CD14-positive monocyte (primary cell): ENCODE measurements at regions of chr4 and their contacts with region 1.

Region 1: GRCh38 chr4:1346781-1347409 is at the start of gene UVSSA:
- DNase-seq: peak; percentile 99 to 100 (median 100)
- H3K4me3 ChIP-seq: peak within 1 kb of the TSS; percentile 59 to 86 (median 86)
- H3K4me3 Mint-ChIP-seq: peak within 1 kb of the TSS; percentile 90 to 94
- H3K27ac ChIP-seq: peak within 1 kb of the TSS; percentile 90 to 95
- H3K27ac Mint-ChIP-seq: peak within 1 kb of the TSS; percentile 93 to 98 (median 97)
- H3K4me1 ChIP-seq: peaks cover 20 to 29% of the 10 kb centered on the region in 2 donors
- H3K4me1 Mint-ChIP-seq: peaks cover 33% of the 10 kb centered on the region
- H3K27me3 ChIP-seq: no peaks in the 10 kb centered on the region
- H3K27me3 Mint-ChIP-seq: peaks cover 0 to 2% (median 0%) of the 10 kb centered on the region in 3 donors
- CTCF ChIP-seq: no peak
- polyA plus RNA-seq, gene UVSSA: 2.6 to 54.0 (median 4.8) TPM

Region 2: DNA sequence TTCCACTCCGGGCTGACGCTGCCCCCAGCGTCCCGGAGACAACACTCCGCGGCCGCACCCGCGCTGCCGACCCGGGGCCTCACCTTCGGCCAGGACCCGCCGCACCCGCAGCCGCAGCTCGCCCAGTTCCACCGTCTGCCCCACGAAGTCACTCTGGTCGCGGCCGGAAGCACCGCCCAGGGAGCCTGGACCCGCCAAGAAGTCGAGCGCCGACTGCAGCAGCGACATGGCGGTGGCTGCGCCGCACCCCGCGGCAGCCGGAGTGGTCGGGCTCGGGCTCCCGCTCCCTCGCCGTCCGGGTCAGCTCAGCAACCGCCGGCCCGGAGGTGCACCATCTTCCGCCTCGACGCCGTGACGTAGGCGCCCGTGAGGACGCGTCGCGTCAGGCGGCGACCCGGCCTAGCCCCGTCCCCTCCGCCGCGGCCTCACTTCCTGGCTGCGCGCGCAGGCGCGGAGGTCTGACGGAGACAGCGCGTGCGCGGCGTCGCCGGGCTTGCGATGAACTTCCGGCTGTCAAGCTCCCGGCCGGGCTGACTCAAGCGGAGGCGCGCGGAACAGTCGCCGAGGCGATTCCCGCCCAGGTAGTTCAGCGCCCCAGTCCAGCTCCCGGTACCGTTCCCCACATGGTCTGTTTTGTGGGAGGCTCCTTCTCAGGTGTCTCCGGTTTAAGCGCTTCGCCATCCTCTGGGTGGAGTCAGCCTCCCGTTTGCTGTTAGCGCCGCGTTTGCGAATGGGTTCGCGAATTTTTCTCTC is 414.8 kb before region 1 on chr4 and contains the starts of genes GAK and TMEM175:
- intact Hi-C with region 1: loop called in 1 of 2 experiments (anchors 2 kb)
- DNase-seq: peak; percentile 96 to 97 (median 97)
- H3K4me3 ChIP-seq: peak within 1 kb of the TSS; percentile 92 to 97 (median 93)
- H3K4me3 Mint-ChIP-seq: peak within 1 kb of the TSS; percentile 96 to 98
- H3K27ac ChIP-seq: peak within 1 kb of the TSS; percentile 84 to 98
- H3K27ac Mint-ChIP-seq: peak within 1 kb of the TSS; percentile 96 to 99 (median 97)
- H3K4me1 ChIP-seq: peaks cover 69 to 76% of the 10 kb centered on the region in 2 donors
- H3K4me1 Mint-ChIP-seq: peaks cover 66% of the 10 kb centered on the region
- H3K27me3 ChIP-seq: no peaks in the 10 kb centered on the region
- H3K27me3 Mint-ChIP-seq: peaks cover 0 to 3% (median 3%) of the 10 kb centered on the region in 3 donors
- CTCF ChIP-seq: no peak
- polyA plus RNA-seq, gene GAK: 40.3 to 88.7 (median 54.9) TPM
- polyA plus RNA-seq, gene TMEM175: 18.9 to 216 (median 20.7) TPM

Region 3: DNA sequence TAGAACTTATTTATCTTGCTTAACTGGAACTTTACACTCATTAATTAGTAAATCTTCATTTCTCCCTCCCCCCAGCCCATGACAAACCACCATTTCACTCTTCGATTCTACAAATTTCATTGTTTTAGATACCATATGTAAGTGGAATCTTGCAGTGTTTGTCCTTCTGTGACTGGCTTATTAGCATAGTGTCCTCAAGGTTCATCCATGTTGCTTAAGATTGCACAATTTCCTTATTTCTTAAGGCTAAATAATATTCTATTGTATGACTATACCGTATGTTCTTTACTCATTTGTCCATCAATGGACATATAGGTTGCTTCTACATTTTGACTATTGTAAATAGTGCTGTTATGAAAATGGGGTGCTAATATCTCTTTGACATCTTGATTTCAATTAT is 209.0 kb before region 1 on chr4:
- intact Hi-C with region 1: loop called in 1 of 2 experiments (anchors 2 kb)
- DNase-seq: peak; percentile 65 to 92 (median 76)
- H3K4me3 ChIP-seq: peak overlapping the region; percentile 47 to 91 (median 76)
- H3K4me3 Mint-ChIP-seq: peak overlapping the region; percentile 57 to 89
- H3K27ac ChIP-seq: peak overlapping the region; percentile 47 to 96
- H3K27ac Mint-ChIP-seq: peak overlapping the region; percentile 90 to 96 (median 93)
- H3K4me1 ChIP-seq: peaks cover 26 to 35% of the 10 kb centered on the region in 2 donors
- H3K4me1 Mint-ChIP-seq: peaks cover 50% of the 10 kb centered on the region
- H3K27me3 ChIP-seq: no peaks in the 10 kb centered on the region
- H3K27me3 Mint-ChIP-seq: peaks cover 6 to 18% (median 18%) of the 10 kb centered on the region in 3 donors
- CTCF ChIP-seq: no peak

Region 4: DNA sequence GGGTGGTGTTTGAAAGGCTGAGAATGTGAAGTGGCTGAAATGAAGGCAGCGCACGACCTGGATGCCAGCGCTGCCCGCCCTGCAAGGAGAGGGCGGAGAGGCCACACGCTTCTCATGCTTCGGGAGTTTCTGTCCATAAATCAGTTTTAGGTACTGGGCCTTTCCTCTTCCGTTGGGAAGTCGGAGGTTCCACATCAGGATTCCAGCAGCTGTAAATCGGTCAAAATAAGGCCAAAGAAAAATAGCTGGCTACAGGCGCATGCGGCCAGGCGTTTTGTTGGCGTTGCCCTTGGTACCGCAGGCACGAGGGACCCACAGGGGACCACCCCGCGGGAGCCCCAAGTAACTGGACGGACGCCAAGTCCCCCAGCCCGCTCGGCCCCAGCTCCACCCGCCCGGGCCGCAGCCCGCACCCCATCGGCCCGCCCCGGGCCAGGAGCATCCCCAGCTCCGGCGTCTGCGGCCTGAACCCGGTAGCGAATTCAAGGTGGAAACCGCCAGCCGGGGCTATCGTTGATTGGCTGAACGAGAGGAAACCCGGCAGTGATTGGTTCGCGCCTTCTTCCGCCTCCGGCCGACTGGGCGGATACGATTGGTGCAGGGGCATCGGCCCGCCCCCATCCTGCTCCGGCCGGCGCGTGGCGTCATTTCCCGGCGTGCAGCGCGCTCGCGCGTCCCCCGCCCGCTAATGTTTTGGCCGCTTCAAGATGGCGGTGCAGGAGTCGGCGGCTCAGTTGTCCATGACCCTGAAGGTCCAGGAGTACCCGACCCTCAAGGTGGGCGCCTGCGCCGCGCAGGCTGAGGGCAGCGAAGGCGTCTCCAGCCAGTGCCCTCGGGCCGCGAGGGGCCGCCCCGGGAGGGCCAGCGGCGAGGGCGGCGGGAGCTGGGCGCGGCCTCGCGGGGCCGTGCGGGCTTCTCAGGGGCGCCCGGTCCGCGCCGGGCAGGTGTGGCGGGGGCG is 57.4 kb before region 1 on chr4 and contains the start of gene MAEA:
- intact Hi-C with region 1: loop called in 1 of 2 experiments (anchors 2 kb)
- DNase-seq: peak; percentile 96 to 97 (median 96)
- H3K4me3 ChIP-seq: peak within 1 kb of the TSS; percentile 54 to 82 (median 73)
- H3K4me3 Mint-ChIP-seq: peak within 1 kb of the TSS; percentile 97
- H3K27ac ChIP-seq: peak within 1 kb of the TSS; percentile 65 to 91
- H3K27ac Mint-ChIP-seq: peak within 1 kb of the TSS; percentile 90 to 97 (median 96)
- H3K4me1 ChIP-seq: peaks cover 25 to 36% of the 10 kb centered on the region in 2 donors
- H3K4me1 Mint-ChIP-seq: peaks cover 34% of the 10 kb centered on the region
- H3K27me3 ChIP-seq: no peaks in the 10 kb centered on the region
- H3K27me3 Mint-ChIP-seq: peaks cover 0 to 1% (median 0%) of the 10 kb centered on the region in 3 donors
- CTCF ChIP-seq: no peak
- polyA plus RNA-seq, gene MAEA: 34.3 to 83.5 (median 37.7) TPM

Region 5: DNA sequence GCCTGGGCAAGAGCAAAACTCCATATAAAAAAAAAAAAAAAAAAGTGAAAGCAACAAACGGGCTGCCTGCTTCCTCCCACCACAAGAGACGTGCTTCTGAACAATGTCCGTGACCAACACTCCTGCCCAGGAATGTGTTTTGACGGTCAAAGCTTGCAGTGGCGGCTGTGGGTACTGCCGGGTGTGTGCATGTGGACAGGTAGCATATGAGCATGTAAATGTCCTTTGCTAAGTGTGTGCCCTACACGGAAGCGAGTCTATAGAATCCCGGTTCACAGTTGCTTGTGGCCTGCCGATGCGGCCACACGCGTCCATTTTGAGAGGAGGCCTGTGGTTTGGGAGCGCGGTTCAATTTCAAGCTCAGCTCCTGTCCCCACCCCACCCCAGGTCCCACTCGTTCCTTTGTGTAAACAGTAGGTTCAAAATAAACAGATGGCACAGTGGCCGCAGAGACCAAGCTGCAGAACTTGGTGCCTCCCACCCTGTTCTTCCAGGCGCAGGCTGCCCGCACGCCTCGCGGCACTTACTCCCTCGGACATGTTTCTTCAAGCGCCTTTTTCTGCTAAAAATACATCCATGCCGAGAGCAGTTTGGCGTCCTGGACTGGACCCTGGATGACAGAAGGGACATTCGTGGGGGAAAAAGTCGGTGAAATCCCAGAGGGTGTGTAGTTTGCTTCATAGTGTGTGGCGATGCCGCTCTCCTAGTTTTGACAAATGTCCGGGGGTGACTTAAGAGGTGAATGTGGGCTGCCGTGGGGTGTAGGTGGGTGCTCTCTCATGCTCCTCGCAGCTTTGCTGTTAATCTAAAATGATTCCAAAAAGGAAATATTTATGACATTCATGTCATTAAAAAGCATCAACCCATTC is 70.9 kb after region 1 on chr4:
- intact Hi-C with region 1: no loop called
- DNase-seq: peak in 1 of 3 donors; percentile 0
- H3K4me3 ChIP-seq: no peak overlapping the region
- H3K4me3 Mint-ChIP-seq: no peak overlapping the region
- H3K27ac ChIP-seq: no peak overlapping the region
- H3K27ac Mint-ChIP-seq: no peak overlapping the region
- H3K4me1 ChIP-seq: no peaks in the 10 kb centered on the region
- H3K4me1 Mint-ChIP-seq: no peaks in the 10 kb centered on the region
- H3K27me3 ChIP-seq: peaks cover 0 to 29% of the 10 kb centered on the region in 2 donors
- H3K27me3 Mint-ChIP-seq: peaks cover 51 to 62% (median 53%) of the 10 kb centered on the region in 3 donors
- CTCF ChIP-seq: no peak

Region 6: DNA sequence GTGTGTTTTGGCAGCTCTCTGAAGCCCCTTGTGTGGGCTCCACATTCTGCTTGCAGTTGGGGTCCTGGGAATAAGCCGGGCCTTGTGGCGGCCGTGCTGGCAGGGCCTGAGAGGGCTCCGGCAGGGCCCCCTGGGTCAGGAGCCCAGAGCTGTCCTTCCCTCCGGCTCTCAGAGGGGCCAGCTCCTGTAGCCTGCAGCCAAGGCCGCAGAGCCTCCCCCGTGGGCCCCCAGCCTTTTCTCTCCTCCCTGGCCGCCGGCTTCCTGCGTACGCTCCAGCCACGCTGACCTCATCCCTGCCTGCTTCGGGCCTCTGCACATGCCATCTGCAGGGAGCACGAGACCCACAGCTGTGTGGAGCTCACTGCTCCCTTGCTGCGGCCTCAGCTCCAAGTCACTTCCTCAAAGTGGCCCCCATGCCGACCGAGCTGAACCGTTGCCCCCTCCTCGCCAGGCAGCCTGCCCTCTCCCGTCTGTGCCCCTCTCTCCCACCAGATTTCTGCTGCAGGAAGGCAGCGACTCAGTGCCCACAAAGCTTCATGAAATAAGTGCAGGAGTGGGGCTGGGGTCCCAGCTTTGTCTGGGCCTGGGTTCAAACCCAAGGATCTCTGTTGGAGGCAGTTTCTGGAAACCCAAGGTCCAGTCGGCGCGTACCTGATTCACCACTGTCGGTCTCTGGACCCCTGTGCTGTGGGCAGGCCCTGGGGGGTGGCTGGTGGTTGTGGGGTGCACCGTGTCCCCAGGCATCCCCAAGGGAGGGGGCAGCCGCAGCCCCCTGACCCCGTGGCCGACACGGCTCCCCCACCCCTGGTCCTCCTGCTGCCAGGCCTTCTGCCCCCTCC is 116.4 kb after region 1 on chr4:
- intact Hi-C with region 1: no loop called
- DNase-seq: no peak
- H3K4me3 ChIP-seq: no peak overlapping the region
- H3K4me3 Mint-ChIP-seq: no peak overlapping the region
- H3K27ac ChIP-seq: no peak overlapping the region
- H3K27ac Mint-ChIP-seq: no peak overlapping the region
- H3K4me1 ChIP-seq: no peaks in the 10 kb centered on the region
- H3K4me1 Mint-ChIP-seq: no peaks in the 10 kb centered on the region
- H3K27me3 ChIP-seq: peaks cover 0 to 18% of the 10 kb centered on the region in 2 donors
- H3K27me3 Mint-ChIP-seq: peaks cover 17 to 32% (median 21%) of the 10 kb centered on the region in 3 donors
- CTCF ChIP-seq: no peak

Region 7: GRCh38 chr4:1721004-1721665 is 374.2 kb after region 1 on chr4 and contains the starts of genes TACC3 and TMEM129:
- intact Hi-C with region 1: loop called in 1 of 2 experiments (anchors 5 kb)
- DNase-seq: peak; percentile 88 to 91 (median 89)
- H3K4me3 ChIP-seq: peak within 1 kb of the TSS; percentile 51 to 80 (median 56)
- H3K4me3 Mint-ChIP-seq: peak within 1 kb of the TSS; percentile 85 to 98
- H3K27ac ChIP-seq: peak within 1 kb of the TSS; percentile 88 to 96
- H3K27ac Mint-ChIP-seq: peak within 1 kb of the TSS; percentile 97 to 100 (median 98)
- H3K4me1 ChIP-seq: peaks cover 59 to 75% of the 10 kb centered on the region in 2 donors
- H3K4me1 Mint-ChIP-seq: peaks cover 62% of the 10 kb centered on the region
- H3K27me3 ChIP-seq: no peaks in the 10 kb centered on the region
- H3K27me3 Mint-ChIP-seq: peaks cover 0 to 3% (median 0%) of the 10 kb centered on the region in 3 donors
- CTCF ChIP-seq: no peak
- polyA plus RNA-seq, gene TACC3: 43.7 to 84.2 (median 56.6) TPM
- polyA plus RNA-seq, gene TMEM129: 22.4 to 40.2 (median 24.1) TPM

Region 8: GRCh38 chr4:1898681-1899080 is 551.8 kb after region 1 on chr4:
- intact Hi-C with region 1: no loop called
- DNase-seq: no peak
- H3K4me3 ChIP-seq: no peak overlapping the region
- H3K4me3 Mint-ChIP-seq: peak overlapping the region in 1 of 2 donors; percentile 59
- H3K27ac ChIP-seq: no peak overlapping the region
- H3K27ac Mint-ChIP-seq: no peak overlapping the region
- H3K4me1 ChIP-seq: peaks cover 0 to 2% of the 10 kb centered on the region in 2 donors
- H3K4me1 Mint-ChIP-seq: peaks cover 4% of the 10 kb centered on the region
- H3K27me3 ChIP-seq: no peaks in the 10 kb centered on the region
- H3K27me3 Mint-ChIP-seq: peaks cover 0 to 1% (median 0%) of the 10 kb centered on the region in 3 donors
- CTCF ChIP-seq: no peak

Region 9: DNA sequence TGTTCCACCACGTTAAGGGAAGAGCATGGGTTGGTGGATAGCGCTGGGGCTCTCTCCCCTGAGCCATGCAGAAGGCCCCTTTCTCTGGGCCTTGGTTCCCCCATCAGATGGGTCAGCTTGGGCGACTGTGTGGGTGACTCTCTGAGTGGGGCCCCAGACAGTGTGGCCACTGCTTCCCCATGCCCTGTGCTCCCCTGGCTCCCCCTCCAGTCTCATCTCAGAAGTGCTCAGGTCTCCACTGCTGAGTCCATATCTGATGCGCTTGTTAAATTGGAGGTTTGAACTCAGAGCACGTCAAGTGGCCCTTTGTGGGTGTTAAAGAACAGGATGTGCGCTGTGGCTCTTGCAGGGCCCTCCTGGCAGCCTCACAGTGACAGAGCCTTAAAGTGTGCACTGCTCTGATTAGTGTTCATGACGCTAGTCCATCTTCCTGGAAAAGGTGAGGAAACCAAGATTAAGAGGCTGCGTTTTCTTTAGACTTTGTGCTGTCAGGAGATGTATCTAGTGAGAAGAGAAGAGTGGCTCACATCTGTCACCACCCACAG is 602.1 kb after region 1 on chr4:
- intact Hi-C with region 1: no loop called
- DNase-seq: no peak
- H3K4me3 ChIP-seq: no peak overlapping the region
- H3K4me3 Mint-ChIP-seq: no peak overlapping the region
- H3K27ac ChIP-seq: no peak overlapping the region
- H3K27ac Mint-ChIP-seq: peak overlapping the region in 3 of 7 donors; percentile 22 to 61 (median 31)
- H3K4me1 ChIP-seq: no peaks in the 10 kb centered on the region
- H3K4me1 Mint-ChIP-seq: no peaks in the 10 kb centered on the region
- H3K27me3 ChIP-seq: no peaks in the 10 kb centered on the region
- H3K27me3 Mint-ChIP-seq: peaks cover 0 to 1% (median 0%) of the 10 kb centered on the region in 3 donors
- CTCF ChIP-seq: no peak